Left colon (tissue), 2 donors: ENCODE measurements at regions of chr13 and their contacts with region 1.

Region 1: DNA sequence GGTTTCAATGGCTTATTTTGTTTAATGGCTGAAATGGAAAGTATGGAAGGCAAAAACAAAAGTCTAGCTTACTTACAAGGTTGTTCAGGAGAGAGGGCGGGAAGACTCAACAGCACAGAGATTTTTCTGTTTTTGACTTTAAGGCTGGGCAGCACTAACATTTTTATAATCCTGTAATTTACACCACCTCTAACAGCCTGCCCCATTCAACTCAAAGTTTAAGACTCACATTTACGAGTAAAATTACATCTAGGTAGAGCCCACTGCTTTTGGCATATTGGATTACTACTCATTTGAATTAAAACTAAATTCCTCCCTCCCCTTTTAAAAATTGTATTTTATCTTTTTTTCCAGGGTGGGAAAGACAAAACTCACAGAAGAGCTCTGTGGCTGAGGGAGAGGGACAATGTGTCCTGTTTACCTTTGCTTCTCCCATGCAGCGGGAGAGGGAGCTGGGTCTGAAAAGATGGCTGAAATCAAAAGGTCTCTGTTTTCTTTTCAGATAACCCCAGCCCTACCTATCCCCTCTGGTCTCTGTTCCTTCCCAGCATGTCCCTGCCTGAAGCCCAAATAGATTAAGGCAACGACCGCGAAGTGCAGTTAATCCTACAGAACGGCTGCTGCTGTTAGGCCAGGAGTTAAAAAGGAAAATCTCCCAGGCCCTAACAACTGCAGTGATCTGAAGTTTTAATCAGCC is 6.6 kb downstream of the EFNB2 start:
- DNase-seq: peak in 1 of 2 donors; percentile 18
- ATAC-seq: peak; percentile 28

Region 2: DNA sequence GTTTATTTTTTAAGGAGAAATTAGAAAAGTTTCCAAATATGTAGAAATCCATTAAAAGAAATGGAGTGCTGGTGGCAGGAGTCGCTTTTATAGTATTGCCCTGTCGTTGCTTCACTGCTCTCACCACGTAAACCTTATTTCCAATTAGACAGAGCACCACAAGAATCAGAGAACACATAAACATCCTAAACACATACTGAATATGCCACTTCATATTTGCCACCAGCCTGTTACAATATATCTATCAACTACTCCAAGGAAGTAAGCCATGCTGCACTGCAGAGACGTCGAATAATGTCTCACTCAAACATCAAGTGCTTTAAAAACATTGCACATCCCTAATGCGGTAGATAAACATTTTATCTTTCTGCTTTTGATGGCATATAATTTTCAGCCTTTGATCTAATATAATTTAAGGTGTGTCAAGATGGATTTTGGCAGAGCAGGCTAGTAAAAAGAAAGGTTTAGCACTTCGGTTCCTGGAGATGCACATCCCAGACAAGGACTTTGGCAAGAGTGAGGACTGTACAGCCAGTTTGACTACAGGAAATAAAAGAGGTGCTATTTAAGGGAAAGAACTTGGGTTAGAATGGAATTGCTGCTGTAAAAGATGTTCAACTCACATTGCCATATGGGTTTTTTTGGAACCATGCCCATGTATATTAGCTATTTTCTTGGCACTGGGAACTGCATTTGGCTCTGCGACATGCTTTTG is 925.8 kb before region 1 on chr13:
- intact Hi-C with region 1: loop called in 1 of 2 experiments (anchors 5 kb)
- DNase-seq: peak in 1 of 2 donors; percentile 5
- ATAC-seq: peak; percentile 97

Region 3: DNA sequence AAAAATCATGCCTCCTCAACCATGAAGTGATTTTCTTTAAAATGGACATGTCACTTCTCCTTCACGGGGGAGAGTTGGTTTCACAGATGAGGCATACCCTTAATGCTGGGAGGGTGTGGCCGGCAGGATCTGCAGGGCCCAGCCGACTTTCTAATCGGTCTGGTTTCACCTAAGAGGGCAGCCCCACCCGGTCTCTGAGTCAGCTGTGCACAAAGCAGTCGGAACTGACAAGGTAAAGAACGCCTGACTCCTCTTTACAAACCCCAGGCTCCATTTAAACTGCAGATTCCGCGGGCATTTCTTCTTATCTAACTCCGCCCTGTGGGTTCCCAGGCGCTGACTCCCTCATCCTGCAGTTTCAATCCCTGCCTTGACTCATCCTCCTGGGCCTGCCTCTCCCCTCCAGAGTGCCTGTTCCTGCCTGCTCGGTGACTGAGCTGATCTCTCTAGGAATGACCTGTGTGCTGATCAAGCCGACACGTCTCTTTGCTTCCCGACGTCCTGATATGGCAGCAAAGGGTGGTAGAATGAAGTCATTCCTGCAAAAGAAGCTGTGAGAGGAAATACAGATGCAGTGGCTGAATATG is 56.8 kb before region 1 on chr13:
- intact Hi-C with region 1: no loop called
- DNase-seq: peak; percentile 58 to 72
- ATAC-seq: peak; percentile 75

Region 4: DNA sequence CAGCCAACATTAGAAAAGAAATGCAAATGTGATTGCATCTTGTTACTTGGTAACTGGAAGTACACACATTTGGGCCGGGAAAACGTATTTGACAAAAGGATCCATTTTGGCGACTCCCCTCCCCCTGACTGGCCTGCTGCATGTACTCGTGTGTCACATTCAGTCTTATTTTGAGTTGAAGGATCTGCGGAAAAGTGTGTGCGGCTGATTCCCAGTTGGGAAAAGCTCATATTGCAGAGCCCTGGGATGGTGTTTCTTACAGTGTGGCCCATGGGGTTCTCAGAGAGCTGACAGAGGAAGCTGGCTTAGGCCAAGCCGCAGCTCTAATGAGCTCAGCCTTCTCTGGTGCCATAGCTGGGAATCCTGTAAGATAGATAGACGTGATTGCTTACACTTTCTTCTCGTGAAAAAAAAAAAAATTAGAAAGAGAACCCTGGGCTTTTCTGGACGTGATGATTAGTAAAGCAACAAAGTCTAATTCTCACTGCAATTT is 209.4 kb after region 1 on chr13:
- intact Hi-C with region 1: no loop called
- DNase-seq: no peak
- ATAC-seq: no peak